CD8-positive, alpha-beta memory T cell (primary cell): ENCODE measurements at regions of chr19 and their contacts with region 1.

Region 1: DNA sequence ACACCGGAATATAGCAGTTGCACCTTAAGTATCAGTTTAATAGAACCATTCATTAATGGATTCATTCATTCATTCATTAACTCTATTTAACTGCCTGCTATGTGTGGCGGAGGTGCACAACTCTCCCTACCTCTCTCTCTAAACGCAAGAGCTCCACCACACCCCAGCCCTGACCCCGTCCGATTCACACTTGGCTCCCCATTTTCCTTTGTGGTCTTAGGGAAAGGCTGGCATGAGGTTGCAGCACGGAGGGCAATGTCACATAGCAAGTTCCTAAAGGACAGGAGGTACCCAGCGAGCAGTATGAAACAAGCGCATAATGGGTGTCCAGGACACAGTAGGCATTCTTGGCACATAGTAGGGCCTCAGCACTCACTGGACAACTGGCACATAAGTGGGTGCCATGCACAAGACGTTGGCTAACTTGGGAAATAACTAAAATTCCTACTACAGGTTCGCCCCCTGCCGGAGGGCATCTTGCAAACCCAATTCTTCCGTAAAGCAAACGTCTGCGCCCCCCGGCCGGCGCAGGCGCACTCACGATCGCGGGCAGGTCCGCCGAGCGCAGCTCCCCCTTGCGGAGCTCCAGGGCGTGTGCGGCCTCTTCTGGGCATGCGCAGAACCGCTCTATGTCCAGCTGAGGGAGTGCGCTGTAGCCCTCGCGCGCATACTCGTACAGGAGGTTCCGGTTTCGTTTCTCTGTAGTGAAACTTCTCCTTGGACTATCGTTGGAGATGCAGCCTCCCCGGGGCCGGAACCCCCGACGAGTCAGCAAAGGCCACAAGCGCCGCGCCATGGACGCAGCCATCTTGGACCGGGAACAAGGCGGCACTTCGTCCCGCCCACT is at the start of gene SARS2:
- DNase-seq: peak; percentile 88 to 97 (median 96)
- H3K4me3 ChIP-seq: peak within 1 kb of the TSS; percentile 96
- H3K4me3 Mint-ChIP-seq: peak within 1 kb of the TSS; percentile 97 to 100 (median 98)
- H3K27ac ChIP-seq: peak within 1 kb of the TSS; percentile 95
- H3K27ac Mint-ChIP-seq: peak within 1 kb of the TSS; percentile 90 to 100 (median 99)
- H3K4me1 ChIP-seq: peaks cover 49% of the 10 kb centered on the region
- H3K4me1 Mint-ChIP-seq: peaks cover 45 to 62% (median 47%) of the 10 kb centered on the region in 3 donors
- H3K27me3 ChIP-seq: no peaks in the 10 kb centered on the region
- H3K27me3 Mint-ChIP-seq: no peaks in the 10 kb centered on the region
- total RNA-seq, gene SARS2: 43.1 to 46.7 TPM

Region 2: GRCh38 chr19:38647368-38647965 is 282.7 kb before region 1 on chr19 and contains the start of gene ACTN4:
- CTCF ChIA-PET with region 1: interaction called, 14 read pairs
- POLR2A ChIA-PET with region 1: no interaction called
- DNase-seq: peak; percentile 100
- H3K4me3 ChIP-seq: peak within 1 kb of the TSS; percentile 71
- H3K4me3 Mint-ChIP-seq: peak within 1 kb of the TSS; percentile 90 to 98 (median 94)
- H3K27ac ChIP-seq: peak within 1 kb of the TSS; percentile 84
- H3K27ac Mint-ChIP-seq: peak within 1 kb of the TSS; percentile 75 to 99 (median 90)
- H3K4me1 ChIP-seq: peaks cover 30% of the 10 kb centered on the region
- H3K4me1 Mint-ChIP-seq: peaks cover 39 to 49% (median 48%) of the 10 kb centered on the region in 3 donors
- H3K27me3 ChIP-seq: no peaks in the 10 kb centered on the region
- H3K27me3 Mint-ChIP-seq: no peaks in the 10 kb centered on the region
- total RNA-seq, gene ACTN4: 295 to 314 TPM

Region 3: GRCh38 chr19:38734426-38735256 is 195.5 kb before region 1 on chr19:
- CTCF ChIA-PET with region 1: interaction called, 16 read pairs
- POLR2A ChIA-PET with region 1: interaction called, 5 read pairs
- DNase-seq: peak in 4 of 5 donors; percentile 29 to 64 (median 42)
- H3K4me3 ChIP-seq: peak overlapping the region; percentile 56
- H3K4me3 Mint-ChIP-seq: peak overlapping the region; percentile 83 to 91 (median 88)
- H3K27ac ChIP-seq: peak overlapping the region; percentile 54
- H3K27ac Mint-ChIP-seq: peak overlapping the region; percentile 86 to 97 (median 88)
- H3K4me1 ChIP-seq: peaks cover 25% of the 10 kb centered on the region
- H3K4me1 Mint-ChIP-seq: peaks cover 39 to 73% (median 40%) of the 10 kb centered on the region in 3 donors
- H3K27me3 ChIP-seq: no peaks in the 10 kb centered on the region
- H3K27me3 Mint-ChIP-seq: peaks cover 0 to 4% of the 10 kb centered on the region in 2 donors

Region 4: DNA sequence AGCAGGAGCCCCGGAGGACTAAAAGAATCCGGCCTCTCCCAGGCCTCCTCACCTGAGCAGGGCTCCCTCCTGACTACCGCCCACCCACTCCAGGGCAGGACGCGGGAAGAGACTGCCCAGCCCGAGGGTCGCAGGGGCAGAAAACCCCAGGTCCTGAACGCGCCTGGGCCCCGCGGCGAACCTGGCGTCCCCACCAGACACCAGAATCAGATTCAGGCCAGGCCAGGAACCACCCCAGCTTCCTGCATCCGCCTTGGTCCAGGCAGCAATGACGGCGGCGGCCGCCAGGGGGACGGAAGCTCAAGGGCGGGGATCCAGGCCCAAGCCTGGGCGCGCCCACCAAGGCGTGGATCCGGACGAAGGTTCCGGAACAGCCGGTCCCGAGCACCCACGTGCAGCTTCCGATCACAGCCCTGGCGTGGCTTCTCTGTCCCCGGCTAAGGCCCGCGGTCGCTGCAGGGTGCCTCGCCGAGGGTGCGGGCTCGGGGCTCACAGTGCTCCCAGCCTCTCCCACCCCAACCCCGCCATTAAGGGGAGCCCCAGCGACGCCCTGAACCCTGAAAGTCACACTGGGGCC is 160.4 kb before region 1 on chr19:
- CTCF ChIA-PET with region 1: interaction called, 14 read pairs
- POLR2A ChIA-PET with region 1: interaction called, 7 read pairs
- DNase-seq: peak; percentile 86 to 93 (median 91)
- H3K4me3 ChIP-seq: no peak overlapping the region
- H3K4me3 Mint-ChIP-seq: peak overlapping the region; percentile 53 to 66 (median 60)
- H3K27ac ChIP-seq: no peak overlapping the region
- H3K27ac Mint-ChIP-seq: peak overlapping the region; percentile 63 to 94 (median 88)
- H3K4me1 ChIP-seq: peaks cover 6% of the 10 kb centered on the region
- H3K4me1 Mint-ChIP-seq: peaks cover 6 to 10% (median 7%) of the 10 kb centered on the region in 3 donors
- H3K27me3 ChIP-seq: no peaks in the 10 kb centered on the region
- H3K27me3 Mint-ChIP-seq: no peaks in the 10 kb centered on the region

Region 5: GRCh38 chr19:39038098-39038497 is 107.9 kb after region 1 on chr19:
- CTCF ChIA-PET with region 1: no interaction called
- POLR2A ChIA-PET with region 1: no interaction called
- DNase-seq: no peak
- H3K4me3 ChIP-seq: no peak overlapping the region
- H3K4me3 Mint-ChIP-seq: no peak overlapping the region
- H3K27ac ChIP-seq: no peak overlapping the region
- H3K27ac Mint-ChIP-seq: no peak overlapping the region
- H3K4me1 ChIP-seq: no peaks in the 10 kb centered on the region
- H3K4me1 Mint-ChIP-seq: no peaks in the 10 kb centered on the region
- H3K27me3 ChIP-seq: no peaks in the 10 kb centered on the region
- H3K27me3 Mint-ChIP-seq: peaks cover 1 to 25% of the 10 kb centered on the region in 2 donors

Region 6: DNA sequence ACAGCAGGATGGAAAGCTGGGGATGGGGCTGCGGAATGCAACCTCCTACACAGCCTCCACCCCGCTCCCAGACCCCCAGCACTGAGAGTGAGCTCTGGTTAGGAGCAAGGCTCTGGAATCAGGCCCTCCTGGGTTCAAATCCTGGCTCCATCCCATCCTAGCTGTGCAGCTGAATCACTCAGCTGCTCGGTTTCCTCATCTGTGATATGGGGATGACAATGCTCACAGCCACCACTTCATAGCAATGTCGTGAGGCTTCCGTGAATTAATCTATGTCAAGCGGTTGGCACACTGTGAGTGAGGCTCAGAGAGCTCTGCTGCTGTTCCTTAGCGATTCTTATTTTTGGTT is 154.6 kb after region 1 on chr19:
- CTCF ChIA-PET with region 1: no interaction called
- POLR2A ChIA-PET with region 1: no interaction called
- DNase-seq: no peak
- H3K4me3 ChIP-seq: no peak overlapping the region
- H3K4me3 Mint-ChIP-seq: peak overlapping the region; percentile 32 to 84 (median 59)
- H3K27ac ChIP-seq: no peak overlapping the region
- H3K27ac Mint-ChIP-seq: peak overlapping the region in 4 of 8 donors; percentile 42 to 86 (median 48)
- H3K4me1 ChIP-seq: peaks cover 12% of the 10 kb centered on the region
- H3K4me1 Mint-ChIP-seq: peaks cover 16 to 23% (median 17%) of the 10 kb centered on the region in 3 donors
- H3K27me3 ChIP-seq: peaks cover 24% of the 10 kb centered on the region
- H3K27me3 Mint-ChIP-seq: peaks cover 23 to 48% of the 10 kb centered on the region in 2 donors